CD4-positive, alpha-beta memory T cell (primary cell): ENCODE measurements at regions of chr17 and their contacts with region 1.

Region 1: GRCh38 chr17:39730095-39730921 is at the start of gene MIEN1:
- DNase-seq: peak; percentile 87 to 97 (median 93)
- H3K4me3 ChIP-seq: peak within 1 kb of the TSS; percentile 92 to 94
- H3K4me3 Mint-ChIP-seq: peak within 1 kb of the TSS; percentile 90 to 94 (median 92)
- H3K27ac ChIP-seq: peak within 1 kb of the TSS; percentile 91
- H3K27ac Mint-ChIP-seq: peak within 1 kb of the TSS; percentile 86 to 95 (median 93)
- H3K4me1 ChIP-seq: peaks cover 22% of the 10 kb centered on the region
- H3K4me1 Mint-ChIP-seq: peaks cover 6 to 33% (median 12%) of the 10 kb centered on the region in 4 donors
- H3K27me3 ChIP-seq: no peaks in the 10 kb centered on the region
- H3K27me3 Mint-ChIP-seq: no peaks in the 10 kb centered on the region
- total RNA-seq, gene MIEN1: 35.8 TPM

Region 2: DNA sequence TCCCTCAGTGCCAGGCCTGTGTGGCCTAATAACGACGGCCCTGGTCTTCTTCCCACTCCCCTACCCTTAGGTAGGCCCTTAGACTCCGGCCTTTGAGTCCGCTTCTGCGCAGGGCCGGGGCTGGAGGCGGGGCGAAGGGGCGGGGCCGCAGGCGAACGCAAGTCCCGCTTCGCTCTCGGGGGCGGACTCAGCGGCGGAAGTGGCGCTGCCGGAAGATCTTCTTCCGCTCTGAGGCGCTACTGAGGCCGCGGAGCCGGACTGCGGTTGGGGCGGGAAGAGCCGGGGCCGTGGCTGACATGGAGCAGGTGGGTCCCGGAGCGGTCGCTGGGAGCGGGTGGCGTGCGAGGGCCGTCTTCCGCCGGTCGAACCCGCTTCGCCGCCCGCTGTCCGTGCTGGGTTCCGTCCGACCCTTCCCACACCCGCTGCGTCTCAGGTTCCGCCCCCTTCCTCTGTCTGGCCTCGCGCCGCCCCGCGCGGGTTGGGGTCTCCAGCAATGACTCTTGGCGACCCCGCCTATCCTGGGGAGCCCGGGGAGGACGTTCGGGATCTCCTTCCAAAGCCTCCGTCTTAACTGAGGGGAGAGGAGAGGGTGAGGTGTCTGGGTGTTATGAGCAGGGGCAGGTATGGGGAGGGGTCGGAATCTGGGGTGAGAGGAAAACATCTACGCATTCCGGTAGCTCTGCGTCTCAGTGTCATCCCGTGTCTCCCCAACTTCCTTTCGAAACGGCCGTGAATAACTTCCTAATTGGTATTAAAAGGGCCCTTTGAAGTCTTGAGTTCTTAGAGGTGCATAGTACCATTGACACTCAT is 93.2 kb before region 1 on chr17 and contains the start of gene STARD3:
- CTCF ChIA-PET with region 1: interaction called, 6 read pairs
- POLR2A ChIA-PET with region 1: interaction called, 4 read pairs
- intact Hi-C with region 1: loop called (anchors 1 kb)
- DNase-seq: peak; percentile 85 to 92 (median 87)
- H3K4me3 ChIP-seq: peak within 1 kb of the TSS; percentile 86 to 88
- H3K4me3 Mint-ChIP-seq: peak within 1 kb of the TSS; percentile 92 to 98 (median 96)
- H3K27ac ChIP-seq: peak within 1 kb of the TSS; percentile 97
- H3K27ac Mint-ChIP-seq: peak within 1 kb of the TSS; percentile 84 to 98 (median 96)
- H3K4me1 ChIP-seq: peaks cover 61% of the 10 kb centered on the region
- H3K4me1 Mint-ChIP-seq: peaks cover 33 to 62% (median 49%) of the 10 kb centered on the region in 4 donors
- H3K27me3 ChIP-seq: no peaks in the 10 kb centered on the region
- H3K27me3 Mint-ChIP-seq: peaks cover 0 to 1% of the 10 kb centered on the region in 2 donors
- total RNA-seq, gene STARD3: 105 to 110 TPM

Region 3: GRCh38 chr17:39668199-39668966 is 61.9 kb before region 1 on chr17 and contains the start of gene PNMT:
- CTCF ChIA-PET with region 1: interaction called, 6 read pairs
- POLR2A ChIA-PET with region 1: interaction called, 14 read pairs
- intact Hi-C with region 1: loop called (anchors 1 kb)
- DNase-seq: peak; percentile 57 to 63 (median 61)
- H3K4me3 ChIP-seq: peak within 1 kb of the TSS in 1 of 2 donors; percentile 45
- H3K4me3 Mint-ChIP-seq: peak within 1 kb of the TSS; percentile 60 to 80 (median 72)
- H3K27ac ChIP-seq: no peak within 1 kb of the TSS
- H3K27ac Mint-ChIP-seq: peak within 1 kb of the TSS in 5 of 7 donors; percentile 21 to 80 (median 41)
- H3K4me1 ChIP-seq: peaks cover 12% of the 10 kb centered on the region
- H3K4me1 Mint-ChIP-seq: peaks cover 6 to 24% (median 7%) of the 10 kb centered on the region in 4 donors
- H3K27me3 ChIP-seq: peaks cover 12% of the 10 kb centered on the region
- H3K27me3 Mint-ChIP-seq: peaks cover 4 to 10% of the 10 kb centered on the region in 2 donors
- total RNA-seq, gene PNMT: 0.55 TPM in 1 of 2 experiments, not detected in the other

Region 4: GRCh38 chr17:39687811-39688518 is 42.3 kb before region 1 on chr17 and contains the start of gene PGAP3:
- CTCF ChIA-PET with region 1: interaction called, 7 read pairs
- POLR2A ChIA-PET with region 1: interaction called, 27 read pairs
- intact Hi-C with region 1: loop called (anchors 1 kb)
- DNase-seq: peak; percentile 83 to 86 (median 83)
- H3K4me3 ChIP-seq: peak within 1 kb of the TSS; percentile 59 to 90
- H3K4me3 Mint-ChIP-seq: peak within 1 kb of the TSS; percentile 95 to 99 (median 98)
- H3K27ac ChIP-seq: peak within 1 kb of the TSS; percentile 67
- H3K27ac Mint-ChIP-seq: peak within 1 kb of the TSS; percentile 94 to 99 (median 98)
- H3K4me1 ChIP-seq: peaks cover 21% of the 10 kb centered on the region
- H3K4me1 Mint-ChIP-seq: peaks cover 19 to 33% (median 28%) of the 10 kb centered on the region in 4 donors
- H3K27me3 ChIP-seq: no peaks in the 10 kb centered on the region
- H3K27me3 Mint-ChIP-seq: no peaks in the 10 kb centered on the region
- total RNA-seq, gene PGAP3: 29.6 to 30.5 TPM

Region 5: GRCh38 chr17:39777534-39778365 is 47.4 kb after region 1 on chr17:
- CTCF ChIA-PET with region 1: interaction called, 4 read pairs
- POLR2A ChIA-PET with region 1: interaction called, 9 read pairs
- intact Hi-C with region 1: loop called (anchors 2 kb)
- DNase-seq: peak in 4 of 5 donors; percentile 34 to 57 (median 48)
- H3K4me3 ChIP-seq: peak overlapping the region; percentile 64 to 74
- H3K4me3 Mint-ChIP-seq: peak overlapping the region; percentile 93 to 99 (median 96)
- H3K27ac ChIP-seq: peak overlapping the region; percentile 77
- H3K27ac Mint-ChIP-seq: peak overlapping the region; percentile 89 to 98 (median 95)
- H3K4me1 ChIP-seq: peaks cover 84% of the 10 kb centered on the region
- H3K4me1 Mint-ChIP-seq: peaks cover 51 to 88% (median 69%) of the 10 kb centered on the region in 4 donors
- H3K27me3 ChIP-seq: no peaks in the 10 kb centered on the region
- H3K27me3 Mint-ChIP-seq: no peaks in the 10 kb centered on the region